OCI-LY7 (cell line): ENCODE measurements at regions of chr2 and their contacts with region 1.

Region 1: GRCh38 chr2:35301369-35301768 is 1054.2 kb upstream of the CRIM1 start:
- DNase-seq: no peak
- H3K4me3 ChIP-seq: no peak overlapping the region
- H3K27ac ChIP-seq: no peak overlapping the region
- H3K4me1 ChIP-seq: no peaks in the 10 kb centered on the region
- CTCF ChIP-seq: no peak

Region 2: DNA sequence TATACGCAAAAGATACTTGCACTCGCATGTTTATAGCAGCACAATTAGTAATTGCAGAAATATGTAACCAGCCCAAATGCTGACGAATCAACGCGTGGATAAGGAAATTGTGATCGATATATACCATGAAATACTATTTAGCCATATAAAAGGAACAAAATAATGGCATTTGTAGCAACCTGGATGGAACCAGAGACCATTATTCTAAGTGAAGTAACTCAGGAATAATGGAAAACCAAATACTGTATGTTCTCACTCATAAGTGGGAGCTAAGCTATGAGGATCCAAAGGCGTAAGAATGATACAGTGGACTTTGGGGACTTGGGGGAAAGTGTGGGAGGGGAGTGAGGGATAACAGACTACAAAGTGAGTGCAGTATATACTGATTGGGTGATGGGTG is 46.2 kb after region 1 on chr2:
- CTCF ChIA-PET with region 1: no interaction called
- POLR2A ChIA-PET with region 1: no interaction called
- intact Hi-C with region 1: loop called (anchors 5 kb)
- DNase-seq: no peak
- H3K4me3 ChIP-seq: no peak overlapping the region
- H3K27ac ChIP-seq: no peak overlapping the region
- H3K4me1 ChIP-seq: no peaks in the 10 kb centered on the region
- CTCF ChIP-seq: no peak